CD14-positive monocyte (primary cell): ENCODE measurements at regions of chr6 and their contacts with region 1.

Region 1: GRCh38 chr6:163956571-163957407 is 542.3 kb downstream of the QKI start:
- DNase-seq: peak; percentile 60 to 74 (median 69)
- H3K4me3 ChIP-seq: no peak overlapping the region
- H3K4me3 Mint-ChIP-seq: no peak overlapping the region
- H3K27ac ChIP-seq: no peak overlapping the region
- H3K27ac Mint-ChIP-seq: no peak overlapping the region
- H3K4me1 ChIP-seq: no peaks in the 10 kb centered on the region
- H3K4me1 Mint-ChIP-seq: peaks cover 3% of the 10 kb centered on the region
- H3K27me3 ChIP-seq: peaks cover 22 to 39% of the 10 kb centered on the region in 2 donors
- H3K27me3 Mint-ChIP-seq: peaks cover 27 to 51% (median 28%) of the 10 kb centered on the region in 3 donors
- CTCF ChIP-seq: peak; percentile 89

Region 2: DNA sequence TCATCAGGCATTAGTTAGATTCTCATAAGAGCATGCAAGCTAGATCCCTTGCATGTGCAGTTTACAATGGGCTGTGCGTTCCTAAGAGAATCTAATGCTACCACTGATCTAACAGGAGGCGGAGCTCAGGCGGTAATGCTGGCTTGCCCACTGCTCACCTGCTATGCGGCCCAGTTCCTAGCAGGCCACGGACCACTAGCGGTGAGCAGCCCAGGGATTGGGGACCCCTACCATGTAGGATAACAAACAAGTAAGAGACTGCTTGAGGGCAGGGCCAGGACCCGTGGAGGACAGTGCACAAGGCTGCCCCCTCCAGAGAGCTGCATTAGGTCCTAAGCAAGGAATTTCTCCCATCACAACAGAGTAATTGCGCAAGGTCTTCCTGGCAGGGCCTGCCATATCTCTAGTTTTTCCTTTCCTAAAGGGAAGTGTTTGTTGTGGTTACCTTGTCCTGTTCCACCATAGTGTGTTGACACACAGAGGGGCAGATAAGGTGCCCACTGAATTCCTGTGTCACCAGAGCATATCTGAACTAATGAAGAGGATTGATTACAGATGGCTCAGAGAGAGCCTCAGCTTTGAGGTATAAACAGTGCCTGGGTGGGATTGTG is 1171.1 kb before region 1 on chr6:
- intact Hi-C with region 1: no loop called
- DNase-seq: no peak
- H3K4me3 ChIP-seq: no peak overlapping the region
- H3K4me3 Mint-ChIP-seq: no peak overlapping the region
- H3K27ac ChIP-seq: no peak overlapping the region
- H3K27ac Mint-ChIP-seq: no peak overlapping the region
- H3K4me1 ChIP-seq: no peaks in the 10 kb centered on the region
- H3K4me1 Mint-ChIP-seq: no peaks in the 10 kb centered on the region
- H3K27me3 ChIP-seq: no peaks in the 10 kb centered on the region
- H3K27me3 Mint-ChIP-seq: no peaks in the 10 kb centered on the region
- CTCF ChIP-seq: no peak

Region 3: DNA sequence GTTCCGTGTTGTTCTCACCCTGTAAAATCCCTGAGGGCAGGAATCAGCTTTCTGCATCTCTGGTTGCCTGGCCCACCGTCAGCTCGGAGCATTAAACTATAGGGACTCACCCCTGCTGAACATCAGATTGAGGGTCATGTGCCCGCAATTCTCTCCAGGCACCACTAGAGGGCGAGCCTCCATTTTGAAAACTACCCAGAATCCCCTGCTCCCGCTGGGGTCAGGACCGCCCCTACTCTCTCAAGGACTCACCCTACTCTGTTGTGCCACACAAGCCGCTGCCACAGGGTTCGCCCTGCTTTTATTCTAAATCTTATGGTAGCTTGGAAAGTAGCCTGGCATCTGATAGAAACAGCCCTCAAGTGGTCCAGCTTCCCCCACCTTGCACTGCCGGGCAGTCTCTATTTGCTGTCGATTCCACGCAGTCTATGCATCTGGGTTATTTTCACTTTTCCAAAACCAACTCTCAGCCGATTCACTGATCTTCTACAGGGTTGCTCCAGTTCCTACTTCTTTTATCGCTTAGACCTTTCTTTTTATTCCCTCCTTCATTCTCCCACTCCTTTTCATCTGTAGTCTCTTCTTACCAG is 786.4 kb before region 1 on chr6:
- intact Hi-C with region 1: loop called in 1 of 2 experiments (anchors 10 kb)
- DNase-seq: peak in 2 of 3 donors; percentile 13 to 17
- H3K4me3 ChIP-seq: no peak overlapping the region
- H3K4me3 Mint-ChIP-seq: no peak overlapping the region
- H3K27ac ChIP-seq: no peak overlapping the region
- H3K27ac Mint-ChIP-seq: no peak overlapping the region
- H3K4me1 ChIP-seq: no peaks in the 10 kb centered on the region
- H3K4me1 Mint-ChIP-seq: no peaks in the 10 kb centered on the region
- H3K27me3 ChIP-seq: no peaks in the 10 kb centered on the region
- H3K27me3 Mint-ChIP-seq: peaks cover 0 to 5% (median 2%) of the 10 kb centered on the region in 3 donors
- CTCF ChIP-seq: peak; percentile 93

Region 4: DNA sequence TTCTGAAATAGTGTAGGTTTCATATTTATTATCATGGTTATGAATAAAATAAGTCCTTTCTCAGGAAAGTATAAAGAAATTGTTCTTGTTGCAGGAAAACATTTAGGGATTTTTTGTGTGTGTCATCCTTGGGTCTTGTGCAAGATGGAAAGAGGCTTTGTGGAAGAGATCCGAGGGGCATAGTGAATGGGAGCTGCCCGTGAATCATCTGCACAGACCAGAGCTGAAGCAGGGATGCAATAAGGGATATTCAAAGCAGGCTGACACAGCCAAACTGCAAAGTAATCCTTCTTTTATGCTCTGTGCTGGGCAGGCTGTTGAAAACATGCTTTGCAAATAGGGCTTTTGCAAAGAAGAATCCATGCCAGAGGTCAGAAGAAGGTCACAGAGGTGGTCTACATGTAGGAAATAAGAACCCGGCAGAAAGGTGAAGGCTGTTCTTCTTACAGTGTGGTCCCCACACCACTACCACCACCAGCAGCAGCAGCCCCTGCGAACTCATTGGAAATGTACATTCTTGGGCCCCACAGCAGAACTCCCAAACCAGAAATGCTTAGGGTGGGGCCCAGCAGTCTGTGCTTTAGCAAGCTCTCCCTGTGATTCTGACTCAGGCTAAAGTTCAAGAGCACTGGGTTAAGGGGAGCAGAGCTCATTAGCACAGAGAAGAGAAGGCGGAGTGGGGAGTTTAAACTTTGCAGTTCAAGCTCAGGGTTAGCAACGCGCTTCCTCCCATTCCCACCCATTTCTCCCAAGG is 304.7 kb before region 1 on chr6:
- intact Hi-C with region 1: loop called in 1 of 2 experiments (anchors 10 kb)
- DNase-seq: peak in 1 of 3 donors; percentile 40
- H3K4me3 ChIP-seq: no peak overlapping the region
- H3K4me3 Mint-ChIP-seq: no peak overlapping the region
- H3K27ac ChIP-seq: no peak overlapping the region
- H3K27ac Mint-ChIP-seq: no peak overlapping the region
- H3K4me1 ChIP-seq: peaks cover 5 to 8% of the 10 kb centered on the region in 2 donors
- H3K4me1 Mint-ChIP-seq: peaks cover 6% of the 10 kb centered on the region
- H3K27me3 ChIP-seq: no peaks in the 10 kb centered on the region
- H3K27me3 Mint-ChIP-seq: peaks cover 6 to 30% (median 23%) of the 10 kb centered on the region in 3 donors
- CTCF ChIP-seq: no peak

Region 5: DNA sequence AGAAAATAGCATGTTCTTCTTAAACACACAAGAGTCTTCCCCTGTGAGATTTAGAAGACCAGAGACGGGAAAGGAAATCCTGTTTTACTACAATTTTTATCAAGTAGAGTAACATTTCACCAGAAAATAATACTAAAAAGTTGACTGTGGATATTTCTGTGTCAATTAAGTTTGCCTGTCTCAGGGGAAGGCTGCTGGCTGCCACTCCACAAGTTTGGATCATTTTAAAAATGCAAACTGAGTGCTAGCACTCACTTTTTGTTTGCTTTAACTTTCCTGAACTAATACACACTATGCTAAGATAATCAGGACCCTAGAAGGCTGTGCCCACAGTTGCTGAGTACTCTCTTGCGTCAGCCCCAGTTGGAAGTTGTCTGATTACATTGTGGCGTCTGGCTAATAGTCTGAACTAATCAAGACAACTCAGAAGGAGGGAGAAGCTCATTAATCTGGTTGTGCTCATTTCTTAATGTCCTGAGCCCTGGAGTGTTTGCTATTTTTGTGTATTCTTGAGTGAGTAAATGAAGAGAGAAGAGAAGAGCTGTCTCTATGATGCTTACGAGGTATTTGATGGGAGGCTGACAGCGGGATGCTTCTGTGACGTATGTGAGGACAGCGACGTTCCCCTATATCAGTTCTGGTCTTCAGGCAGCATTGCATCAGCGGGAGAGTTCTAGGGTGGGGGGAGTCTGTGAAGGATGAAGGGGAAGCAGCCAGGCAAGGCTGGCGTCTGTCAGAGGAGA is 121.9 kb after region 1 on chr6:
- intact Hi-C with region 1: no loop called
- DNase-seq: no peak
- H3K4me3 ChIP-seq: no peak overlapping the region
- H3K4me3 Mint-ChIP-seq: no peak overlapping the region
- H3K27ac ChIP-seq: no peak overlapping the region
- H3K27ac Mint-ChIP-seq: peak overlapping the region in 2 of 7 donors; percentile 0 to 6
- H3K4me1 ChIP-seq: no peaks in the 10 kb centered on the region
- H3K4me1 Mint-ChIP-seq: no peaks in the 10 kb centered on the region
- H3K27me3 ChIP-seq: no peaks in the 10 kb centered on the region
- H3K27me3 Mint-ChIP-seq: peaks cover 0 to 3% (median 2%) of the 10 kb centered on the region in 3 donors
- CTCF ChIP-seq: no peak